CD14-positive monocyte (primary cell): ENCODE measurements at regions of chr3 and their contacts with region 1.

Region 1: GRCh38 chr3:9792405-9793160 is at the starts of genes ARPC4 and TADA3:
- DNase-seq: peak; percentile 93 to 95 (median 94)
- H3K4me3 ChIP-seq: peak within 1 kb of the TSS; percentile 76 to 96 (median 77)
- H3K4me3 Mint-ChIP-seq: peak within 1 kb of the TSS; percentile 93 to 99
- H3K27ac ChIP-seq: peak within 1 kb of the TSS; percentile 91 to 97
- H3K27ac Mint-ChIP-seq: peak within 1 kb of the TSS; percentile 87 to 100 (median 99)
- H3K4me1 ChIP-seq: peaks cover 39 to 42% of the 10 kb centered on the region in 2 donors
- H3K4me1 Mint-ChIP-seq: peaks cover 38% of the 10 kb centered on the region
- H3K27me3 ChIP-seq: no peaks in the 10 kb centered on the region
- H3K27me3 Mint-ChIP-seq: peaks cover 0 to 1% (median 0%) of the 10 kb centered on the region in 3 donors
- CTCF ChIP-seq: no peak
- polyA plus RNA-seq, gene ARPC4: 211 to 390 (median 389) TPM
- polyA plus RNA-seq, gene TADA3: 36.1 to 47.2 (median 46.9) TPM

Region 2: DNA sequence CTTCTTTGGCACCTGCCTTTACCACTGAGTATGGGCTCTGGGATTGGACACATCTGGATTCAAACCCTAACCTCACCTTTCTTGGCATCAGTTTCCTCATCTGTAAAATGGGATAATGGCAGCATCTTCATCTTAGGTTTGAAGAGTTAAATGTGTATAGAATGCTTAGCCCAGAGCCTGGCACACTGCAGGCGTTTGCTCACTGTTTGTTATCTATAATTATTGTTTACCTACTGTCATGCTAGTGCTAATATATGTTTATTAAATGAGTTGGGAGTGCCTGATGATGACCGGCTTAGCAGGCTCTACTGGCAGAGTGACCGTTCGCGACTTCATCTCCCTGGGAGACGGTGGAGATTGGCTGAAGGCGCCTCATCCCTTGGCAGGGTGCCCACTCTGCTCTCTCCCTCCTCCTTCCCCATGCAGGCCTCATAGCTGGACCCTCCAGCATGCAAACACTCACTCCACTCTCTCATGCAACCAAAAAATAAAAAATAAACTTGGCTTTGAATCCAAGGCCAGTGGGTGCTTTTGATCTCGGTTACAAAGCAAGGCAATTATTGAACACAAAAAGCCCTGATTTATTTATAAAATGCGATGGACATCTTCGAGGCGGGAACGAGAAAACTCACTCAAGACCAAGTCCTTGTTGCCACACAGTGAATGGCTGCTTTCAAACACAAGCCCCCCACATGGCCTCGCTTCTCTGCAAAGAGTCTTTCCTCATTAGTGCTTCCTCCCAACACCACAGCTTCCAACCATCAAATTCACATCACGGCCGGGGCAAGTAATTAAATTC is 693.8 kb before region 1 on chr3:
- intact Hi-C with region 1: no loop called
- DNase-seq: no peak
- H3K4me3 ChIP-seq: no peak overlapping the region
- H3K4me3 Mint-ChIP-seq: no peak overlapping the region
- H3K27ac ChIP-seq: no peak overlapping the region
- H3K27ac Mint-ChIP-seq: peak overlapping the region in 2 of 7 donors; percentile 42 to 50
- H3K4me1 ChIP-seq: no peaks in the 10 kb centered on the region
- H3K4me1 Mint-ChIP-seq: peaks cover 10% of the 10 kb centered on the region
- H3K27me3 ChIP-seq: no peaks in the 10 kb centered on the region
- H3K27me3 Mint-ChIP-seq: peaks cover 0 to 2% (median 0%) of the 10 kb centered on the region in 3 donors
- CTCF ChIP-seq: no peak

Region 3: DNA sequence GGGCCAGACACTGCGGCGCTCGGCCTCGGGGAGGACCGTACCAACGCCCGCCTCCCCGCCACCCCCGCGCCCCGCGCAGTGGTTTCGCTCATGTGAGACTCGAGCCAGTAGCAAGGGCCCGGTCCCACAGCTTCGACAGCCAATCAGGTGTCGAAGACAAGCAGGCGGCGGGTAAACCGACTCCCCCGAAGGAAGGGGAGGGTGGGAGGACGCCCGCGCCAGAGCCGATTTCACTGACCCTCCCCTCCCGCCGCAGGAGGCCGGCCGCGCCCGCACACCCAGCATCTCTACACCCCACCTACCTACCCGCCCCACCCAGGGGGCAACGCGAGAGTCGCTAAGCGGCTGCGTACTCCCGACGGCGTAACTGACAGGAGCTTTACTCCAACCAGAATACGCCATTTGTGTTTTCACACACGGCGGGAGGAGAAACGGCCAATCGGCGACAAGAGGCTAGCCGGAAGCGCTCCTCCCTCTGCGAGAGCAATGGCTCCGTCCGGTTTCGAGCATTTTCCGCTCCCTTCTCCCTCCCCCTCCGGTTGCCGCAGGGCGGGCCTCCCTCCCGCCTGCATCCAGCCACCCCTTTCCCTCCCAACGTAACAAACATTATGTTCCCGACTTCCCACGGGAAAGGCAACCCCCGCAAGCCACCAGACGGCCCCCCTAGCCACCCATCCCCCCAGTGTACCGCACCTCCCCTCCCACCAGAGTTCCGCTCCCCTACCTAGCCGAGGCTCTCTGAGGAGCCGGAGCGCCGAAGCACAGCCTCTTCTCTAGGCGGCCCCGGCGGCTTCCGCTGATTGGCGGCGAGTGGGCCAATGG is 395.7 kb before region 1 on chr3:
- intact Hi-C with region 1: loop called in 1 of 2 experiments (anchors 2 kb)
- DNase-seq: peak; percentile 96 to 98 (median 96)
- H3K4me3 ChIP-seq: peak overlapping the region; percentile 49 to 86 (median 75)
- H3K4me3 Mint-ChIP-seq: peak overlapping the region; percentile 91 to 92
- H3K27ac ChIP-seq: peak overlapping the region; percentile 96 to 99
- H3K27ac Mint-ChIP-seq: peak overlapping the region; percentile 98 to 100 (median 99)
- H3K4me1 ChIP-seq: peaks cover 27 to 60% of the 10 kb centered on the region in 2 donors
- H3K4me1 Mint-ChIP-seq: peaks cover 59% of the 10 kb centered on the region
- H3K27me3 ChIP-seq: no peaks in the 10 kb centered on the region
- H3K27me3 Mint-ChIP-seq: peaks cover 0 to 1% (median 0%) of the 10 kb centered on the region in 3 donors
- CTCF ChIP-seq: no peak

Region 4: GRCh38 chr3:9649791-9650521 is 142.6 kb before region 1 on chr3:
- intact Hi-C with region 1: loop called (anchors 5 to 10 kb)
- DNase-seq: peak; percentile 77 to 92 (median 87)
- H3K4me3 ChIP-seq: peak overlapping the region; percentile 94 to 99 (median 95)
- H3K4me3 Mint-ChIP-seq: peak overlapping the region; percentile 99
- H3K27ac ChIP-seq: peak overlapping the region; percentile 89 to 92
- H3K27ac Mint-ChIP-seq: peak overlapping the region; percentile 94 to 99 (median 99)
- H3K4me1 ChIP-seq: peaks cover 16 to 22% of the 10 kb centered on the region in 2 donors
- H3K4me1 Mint-ChIP-seq: peaks cover 35% of the 10 kb centered on the region
- H3K27me3 ChIP-seq: no peaks in the 10 kb centered on the region
- H3K27me3 Mint-ChIP-seq: peaks cover 0 to 1% (median 1%) of the 10 kb centered on the region in 3 donors
- CTCF ChIP-seq: no peak

Region 5: GRCh38 chr3:9749645-9750555 is 42.7 kb before region 1 on chr3 and contains the start of gene OGG1:
- intact Hi-C with region 1: loop called (anchors 2 kb)
- DNase-seq: peak; percentile 96 to 97 (median 97)
- H3K4me3 ChIP-seq: peak within 1 kb of the TSS; percentile 57 to 92 (median 80)
- H3K4me3 Mint-ChIP-seq: peak within 1 kb of the TSS; percentile 90 to 98
- H3K27ac ChIP-seq: peak within 1 kb of the TSS; percentile 84 to 89
- H3K27ac Mint-ChIP-seq: peak within 1 kb of the TSS; percentile 95 to 99 (median 96)
- H3K4me1 ChIP-seq: peaks cover 29 to 35% of the 10 kb centered on the region in 2 donors
- H3K4me1 Mint-ChIP-seq: peaks cover 37% of the 10 kb centered on the region
- H3K27me3 ChIP-seq: no peaks in the 10 kb centered on the region
- H3K27me3 Mint-ChIP-seq: peaks cover 0 to 2% (median 0%) of the 10 kb centered on the region in 3 donors
- CTCF ChIP-seq: no peak
- polyA plus RNA-seq, gene OGG1: 17.4 to 21.9 (median 20.5) TPM

Region 6: GRCh38 chr3:9843715-9844438 is 51.3 kb after region 1 on chr3 and contains the start of gene RPUSD3:
- intact Hi-C with region 1: loop called (anchors 5 to 10 kb)
- DNase-seq: peak; percentile 95 to 96 (median 95)
- H3K4me3 ChIP-seq: peak within 1 kb of the TSS; percentile 60 to 98 (median 86)
- H3K4me3 Mint-ChIP-seq: peak within 1 kb of the TSS; percentile 98
- H3K27ac ChIP-seq: peak within 1 kb of the TSS; percentile 6 to 76
- H3K27ac Mint-ChIP-seq: peak within 1 kb of the TSS; percentile 79 to 91 (median 88)
- H3K4me1 ChIP-seq: peaks cover 23 to 24% of the 10 kb centered on the region in 2 donors
- H3K4me1 Mint-ChIP-seq: peaks cover 28% of the 10 kb centered on the region
- H3K27me3 ChIP-seq: no peaks in the 10 kb centered on the region
- H3K27me3 Mint-ChIP-seq: peaks cover 0 to 5% (median 0%) of the 10 kb centered on the region in 3 donors
- CTCF ChIP-seq: no peak
- polyA plus RNA-seq, gene RPUSD3: 42.6 to 51.5 (median 43.4) TPM

Region 7: DNA sequence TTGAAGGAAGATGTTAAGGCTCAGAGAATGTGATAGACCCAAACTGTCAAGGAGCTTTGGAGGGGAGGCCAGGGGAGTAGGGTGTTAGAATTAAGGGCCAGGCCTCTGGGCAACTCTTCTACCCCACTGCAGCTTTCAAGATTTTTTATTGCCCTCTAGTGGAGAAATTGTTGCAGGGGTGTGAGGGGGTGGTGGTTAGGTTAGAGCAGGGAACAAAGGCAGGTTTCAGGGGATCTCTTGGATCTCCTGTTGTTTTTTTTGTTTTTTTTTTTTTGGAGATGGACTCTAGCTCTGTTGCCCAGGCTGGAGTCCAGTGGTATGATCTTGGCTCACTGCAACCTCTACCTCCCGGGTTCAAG is 529.7 kb after region 1 on chr3:
- intact Hi-C with region 1: loop called in 1 of 2 experiments (anchors 2 kb)
- DNase-seq: peak in 2 of 3 donors; percentile 13 to 23
- H3K4me3 ChIP-seq: no peak overlapping the region
- H3K4me3 Mint-ChIP-seq: no peak overlapping the region
- H3K27ac ChIP-seq: no peak overlapping the region
- H3K27ac Mint-ChIP-seq: peak overlapping the region in 5 of 7 donors; percentile 21 to 96 (median 75)
- H3K4me1 ChIP-seq: peaks cover 16 to 22% of the 10 kb centered on the region in 2 donors
- H3K4me1 Mint-ChIP-seq: peaks cover 21% of the 10 kb centered on the region
- H3K27me3 ChIP-seq: no peaks in the 10 kb centered on the region
- H3K27me3 Mint-ChIP-seq: peaks cover 6 to 13% (median 6%) of the 10 kb centered on the region in 3 donors
- CTCF ChIP-seq: peak; percentile 39